Activated CD4-positive, alpha-beta T cell treated with anti-CD3 and anti-CD28 coated beads, Interleukin-2, amount 10 ng/mL, durations not matched to agents 24 days and 14 days (primary cell): ENCODE measurements at regions of chr1 and their contacts with region 1.

Region 1: GRCh38 chr1:228212966-228213844 is 5.4 kb downstream of the OBSCN start:
- DNase-seq: peak; percentile 95
- H3K4me3 Mint-ChIP-seq: peak overlapping the region; percentile 95
- H3K27ac Mint-ChIP-seq: peak overlapping the region; percentile 91
- H3K4me1 Mint-ChIP-seq: peaks cover 7% of the 10 kb centered on the region
- H3K27me3 Mint-ChIP-seq: no peaks in the 10 kb centered on the region

Region 2: DNA sequence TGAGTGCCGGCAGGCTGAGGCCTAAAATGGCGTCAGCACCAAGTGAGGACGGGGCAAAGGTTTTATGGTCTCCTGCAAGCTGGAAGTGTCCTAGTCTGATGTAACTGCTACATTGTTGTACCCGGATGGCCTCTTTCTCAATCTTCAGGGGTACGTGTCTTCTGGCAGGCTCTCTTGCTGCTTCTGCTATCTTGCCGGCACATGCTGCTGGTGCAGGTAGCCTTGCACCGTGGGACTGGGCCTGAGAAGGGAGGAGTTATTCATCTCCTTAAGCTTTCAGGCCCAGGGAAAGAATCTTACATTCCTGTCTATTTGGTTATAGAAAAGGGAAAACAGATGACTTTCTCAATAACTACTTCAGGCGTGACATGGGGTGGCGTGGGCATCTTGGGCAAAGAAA is 577.6 kb before region 1 on chr1:
- intact Hi-C with region 1: no loop called
- DNase-seq: no peak
- H3K4me3 Mint-ChIP-seq: no peak overlapping the region
- H3K27ac Mint-ChIP-seq: no peak overlapping the region
- H3K4me1 Mint-ChIP-seq: no peaks in the 10 kb centered on the region
- H3K27me3 Mint-ChIP-seq: no peaks in the 10 kb centered on the region

Region 3: DNA sequence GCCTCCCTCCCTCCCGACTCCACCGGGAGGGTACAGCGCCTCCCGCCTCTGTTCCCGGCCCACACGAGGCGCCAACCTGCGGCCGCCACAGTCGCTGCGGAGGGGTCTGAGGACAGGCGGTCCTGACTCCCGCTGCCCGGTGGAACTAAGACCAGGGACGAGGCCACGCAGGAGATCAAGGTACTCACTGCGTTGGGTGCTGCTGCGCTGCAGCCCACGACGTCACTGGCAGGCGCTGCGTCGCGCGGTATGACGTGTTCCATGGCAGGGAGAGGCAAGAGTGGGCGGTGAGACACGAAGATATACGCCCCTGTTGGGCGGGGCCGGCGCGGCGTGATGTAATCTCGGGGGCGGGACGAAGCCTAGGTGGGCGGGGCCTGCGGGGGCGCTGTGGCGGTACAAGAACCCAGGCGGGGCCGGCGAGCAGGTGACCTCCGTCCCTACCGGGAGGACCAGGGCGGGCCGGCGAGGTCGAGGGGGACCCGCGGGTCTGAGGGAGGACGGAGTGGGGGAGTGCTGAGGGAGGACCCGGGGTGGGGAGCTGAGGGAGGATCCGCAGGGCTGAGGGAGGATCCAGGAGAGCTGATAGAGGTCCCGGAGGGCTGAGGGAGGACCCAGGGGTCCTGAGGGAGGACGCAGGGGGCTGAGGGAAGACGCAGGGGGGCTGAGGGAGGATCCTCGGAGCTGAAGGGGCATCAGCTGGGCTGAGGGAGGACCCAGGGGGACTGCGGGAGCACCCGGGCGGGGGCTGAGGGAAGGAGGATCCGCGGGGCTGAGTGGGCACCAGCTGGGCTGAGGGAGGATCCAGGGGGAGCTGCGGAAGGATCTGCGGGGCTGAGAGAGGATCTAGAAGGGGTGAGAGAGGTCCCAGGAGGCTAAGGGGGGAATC is 103.9 kb before region 1 on chr1 and contains the start of gene MRPL55:
- intact Hi-C with region 1: loop called (anchors 1 kb)
- DNase-seq: peak; percentile 100
- H3K4me3 Mint-ChIP-seq: peak within 1 kb of the TSS; percentile 95
- H3K27ac Mint-ChIP-seq: peak within 1 kb of the TSS; percentile 88
- H3K4me1 Mint-ChIP-seq: peaks cover 23% of the 10 kb centered on the region
- H3K27me3 Mint-ChIP-seq: peaks cover 2% of the 10 kb centered on the region
- total RNA-seq, gene MRPL55: 55.2 and 62.2 TPM in 2 replicates

Region 4: GRCh38 chr1:228174482-228175375 is 38.5 kb before region 1 on chr1:
- intact Hi-C with region 1: loop called (anchors 2 kb)
- DNase-seq: peak; percentile 72
- H3K4me3 Mint-ChIP-seq: no peak overlapping the region
- H3K27ac Mint-ChIP-seq: no peak overlapping the region
- H3K4me1 Mint-ChIP-seq: no peaks in the 10 kb centered on the region
- H3K27me3 Mint-ChIP-seq: no peaks in the 10 kb centered on the region

Region 5: GRCh38 chr1:228378090-228378872 is 165.1 kb after region 1 on chr1:
- intact Hi-C with region 1: loop called (anchors 5 kb)
- DNase-seq: peak; percentile 89
- H3K4me3 Mint-ChIP-seq: peak overlapping the region; percentile 91
- H3K27ac Mint-ChIP-seq: no peak overlapping the region
- H3K4me1 Mint-ChIP-seq: peaks cover 6% of the 10 kb centered on the region
- H3K27me3 Mint-ChIP-seq: peaks cover 34% of the 10 kb centered on the region

Region 6: GRCh38 chr1:228515200-228515834 is 302.1 kb after region 1 on chr1:
- intact Hi-C with region 1: loop called (anchors 2 kb)
- DNase-seq: peak; percentile 80
- H3K4me3 Mint-ChIP-seq: no peak overlapping the region
- H3K27ac Mint-ChIP-seq: no peak overlapping the region
- H3K4me1 Mint-ChIP-seq: peaks cover 13% of the 10 kb centered on the region
- H3K27me3 Mint-ChIP-seq: peaks cover 51% of the 10 kb centered on the region